Activated naive CD4-positive, alpha-beta T cell treated with anti-CD3 and anti-CD28 coated beads for 36 hours (primary cell): ENCODE measurements at regions of chr10 and their contacts with region 1.

Region 1: GRCh38 chr10:42552493-42553407 is 85.6 kb downstream of the ZNF33B start:
- DNase-seq: peak; percentile 97
- H3K4me3 Mint-ChIP-seq: peak overlapping the region; percentile 87
- H3K27ac Mint-ChIP-seq: peak overlapping the region; percentile 92
- H3K4me1 Mint-ChIP-seq: peaks cover 33% of the 10 kb centered on the region
- H3K27me3 Mint-ChIP-seq: no peaks in the 10 kb centered on the region

Region 2: DNA sequence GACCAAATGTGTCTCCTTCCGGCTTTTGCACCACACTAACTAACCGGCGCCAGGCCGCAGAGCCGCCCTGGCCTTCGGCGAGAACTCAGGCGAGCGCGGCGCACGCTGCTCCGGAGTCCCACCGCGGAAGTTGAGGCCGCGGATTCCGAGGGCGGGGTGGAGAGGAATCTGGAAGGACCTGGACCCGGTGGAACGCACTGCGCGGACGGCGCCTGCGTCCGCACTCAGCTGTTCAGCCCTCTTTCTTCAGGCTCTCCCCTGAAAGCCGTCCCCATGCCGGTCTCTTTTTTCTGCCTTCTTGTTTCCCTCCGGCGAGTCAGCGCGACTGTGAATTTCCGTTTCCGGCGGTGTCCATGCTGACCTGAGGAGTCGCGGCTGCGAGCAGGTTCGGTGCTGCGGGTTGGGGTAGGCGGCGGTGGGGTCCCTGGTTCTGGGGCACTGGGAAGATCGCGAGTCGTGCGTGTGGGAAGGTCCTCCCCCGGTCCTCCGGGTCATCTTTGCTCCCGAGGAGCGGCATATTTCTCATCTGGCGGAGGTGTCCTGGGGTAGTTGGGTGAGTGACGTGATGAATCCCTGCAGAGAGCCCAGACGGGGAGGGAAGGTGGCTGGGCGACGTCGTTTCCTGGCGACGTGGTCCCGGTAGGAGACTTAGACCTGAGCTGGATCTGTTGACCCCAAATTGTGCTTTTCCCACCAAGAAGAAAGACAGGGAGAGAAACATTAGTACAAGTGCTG is 229.9 kb after region 1 on chr10 and contains the start of gene BMS1:
- CTCF ChIA-PET with region 1: no interaction called
- intact Hi-C with region 1: loop called (anchors 5 kb)
- DNase-seq: peak; percentile 93
- H3K4me3 Mint-ChIP-seq: peak within 1 kb of the TSS; percentile 82
- H3K27ac Mint-ChIP-seq: peak within 1 kb of the TSS; percentile 89
- H3K4me1 Mint-ChIP-seq: peaks cover 28% of the 10 kb centered on the region
- H3K27me3 Mint-ChIP-seq: no peaks in the 10 kb centered on the region
- total RNA-seq, gene BMS1: 21.4 to 21.6 TPM

Region 3: GRCh38 chr10:43981232-43981631 is 1428.5 kb after region 1 on chr10:
- CTCF ChIA-PET with region 1: no interaction called
- intact Hi-C with region 1: loop called (anchors 10 kb)
- DNase-seq: no peak
- H3K4me3 Mint-ChIP-seq: no peak overlapping the region
- H3K27ac Mint-ChIP-seq: no peak overlapping the region
- H3K4me1 Mint-ChIP-seq: peaks cover 15% of the 10 kb centered on the region
- H3K27me3 Mint-ChIP-seq: no peaks in the 10 kb centered on the region